ENCODE measurements at regions of chr3 and their contacts with region 1.

Region 1: DNA sequence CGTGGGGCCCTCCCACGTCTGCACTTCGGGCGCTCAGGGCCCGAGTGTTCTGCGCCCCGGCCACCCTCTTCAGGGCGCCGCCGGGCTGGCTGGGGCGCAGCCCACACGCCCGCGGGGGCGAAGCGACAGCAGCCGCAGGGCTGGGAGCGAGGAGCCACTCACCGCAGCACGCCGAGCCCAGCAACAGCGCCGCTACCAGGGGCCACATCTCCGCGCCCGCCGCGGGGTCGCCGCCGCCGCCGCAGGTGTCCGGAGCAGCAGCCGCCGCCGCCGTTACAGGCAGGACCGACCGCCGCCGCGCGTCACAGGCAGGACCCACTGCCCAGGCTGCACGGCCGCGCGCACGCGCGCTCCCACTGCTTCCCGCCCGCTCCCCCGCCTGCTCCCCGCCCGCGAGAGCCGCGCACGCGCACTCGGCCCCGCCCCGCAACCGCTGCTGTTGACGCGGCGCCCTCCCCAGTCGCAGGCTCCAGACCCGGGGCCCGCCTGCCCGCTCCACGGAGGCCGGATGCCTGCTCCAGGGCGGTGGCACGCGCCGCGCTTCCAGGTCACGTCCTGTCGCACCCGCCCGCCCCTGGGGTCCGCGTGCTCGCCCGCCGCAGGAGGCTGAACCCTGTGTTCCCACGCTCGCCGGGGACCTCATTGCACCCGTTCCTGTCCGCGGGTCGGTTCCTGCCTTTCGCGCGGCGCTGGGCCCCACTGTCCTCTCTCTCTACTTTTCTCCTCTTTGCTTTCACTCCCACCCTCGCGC is at the start of gene CD47:
- DNase-seq: peak; percentile 94 to 98 (median 98)
- ATAC-seq: peak; percentile 74
- H3K4me3 ChIP-seq: peak within 1 kb of the TSS; percentile 93
- H3K4me3 Mint-ChIP-seq: peak within 1 kb of the TSS; percentile 100
- H3K27ac ChIP-seq: peak within 1 kb of the TSS; percentile 92 to 98
- H3K27ac Mint-ChIP-seq: no peak within 1 kb of the TSS
- H3K4me1 ChIP-seq: peaks cover 35% of the 10 kb centered on the region
- H3K4me1 Mint-ChIP-seq: peaks cover 38% of the 10 kb centered on the region
- H3K27me3 ChIP-seq: no peaks in the 10 kb centered on the region
- H3K27me3 Mint-ChIP-seq: no peaks in the 10 kb centered on the region
- CTCF ChIP-seq: no peak
- total RNA-seq, gene CD47: 166 to 170 TPM

Region 2: DNA sequence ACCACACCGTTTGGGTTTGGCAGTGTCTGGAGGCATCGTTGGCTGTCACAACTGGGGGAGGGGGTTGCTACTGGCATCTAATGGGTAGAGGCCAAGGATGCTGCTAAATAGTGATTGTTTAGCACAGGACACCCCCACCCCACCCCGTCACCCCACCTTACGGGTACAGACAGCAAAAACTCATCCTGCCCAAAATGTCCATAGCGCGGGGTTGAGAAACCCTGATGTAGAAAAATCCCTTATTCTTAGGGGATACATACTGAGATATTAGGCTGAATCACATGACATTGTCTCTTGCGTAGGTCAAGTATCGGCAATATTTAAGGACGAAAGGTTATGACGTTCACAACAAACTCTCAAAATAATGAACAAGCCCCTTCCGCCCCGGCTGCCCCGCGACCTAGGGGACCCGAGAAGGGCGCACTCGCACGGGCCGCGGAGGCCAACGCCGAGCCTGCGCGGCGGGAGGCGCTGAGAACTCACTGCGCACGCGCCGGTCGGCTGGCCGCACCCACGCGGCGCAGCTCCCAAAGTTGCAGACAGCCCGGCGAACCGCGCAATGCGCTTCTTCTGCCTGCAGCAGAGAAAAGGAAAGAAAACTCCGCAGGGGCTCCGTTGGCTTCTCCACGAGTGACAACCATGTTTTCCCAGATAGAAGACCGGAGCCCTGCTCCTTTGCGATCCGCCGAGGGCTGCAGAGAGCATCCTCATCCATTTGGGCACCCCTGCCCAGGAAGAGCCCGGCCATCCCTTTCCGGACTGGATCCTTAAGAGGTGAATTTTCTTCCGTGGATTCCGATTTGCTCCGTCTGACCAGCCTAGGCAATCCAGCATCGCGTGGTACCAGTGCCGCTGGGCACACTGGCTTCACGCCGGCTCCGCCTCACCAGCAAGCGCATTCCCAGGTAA is 850.4 kb before region 1 on chr3:
- CTCF ChIA-PET with region 1: no interaction called
- POLR2A ChIA-PET with region 1: no interaction called
- intact Hi-C with region 1: no loop called
- DNase-seq: peak; percentile 46 to 89 (median 65)
- ATAC-seq: peak; percentile 90
- H3K4me3 ChIP-seq: peak overlapping the region; percentile 70
- H3K4me3 Mint-ChIP-seq: peak overlapping the region; percentile 92
- H3K27ac ChIP-seq: no peak overlapping the region
- H3K27ac Mint-ChIP-seq: peak overlapping the region; percentile 40
- H3K4me1 ChIP-seq: peaks cover 14% of the 10 kb centered on the region
- H3K4me1 Mint-ChIP-seq: peaks cover 13% of the 10 kb centered on the region
- H3K27me3 ChIP-seq: no peaks in the 10 kb centered on the region
- H3K27me3 Mint-ChIP-seq: peaks cover 7% of the 10 kb centered on the region
- CTCF ChIP-seq: no peak

Region 3: DNA sequence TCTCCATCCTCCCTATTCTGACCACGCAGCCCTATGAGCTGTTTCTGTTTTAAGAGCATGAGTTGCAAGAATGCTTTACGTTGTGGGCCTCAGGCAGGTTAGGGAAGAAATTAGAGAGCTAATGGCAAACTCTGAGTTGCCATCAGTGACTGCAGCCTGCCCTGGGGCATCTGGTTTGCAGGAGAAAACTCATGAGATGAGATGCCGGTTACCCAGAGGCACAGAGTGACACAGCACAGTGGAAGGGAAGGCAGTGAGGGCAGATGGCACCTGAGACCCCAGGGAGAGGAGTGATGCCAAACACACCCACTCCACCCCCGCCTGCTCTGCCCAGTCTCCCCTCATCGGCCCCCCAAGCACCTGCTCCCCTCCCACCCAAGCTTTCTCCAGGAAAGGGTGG is 265.3 kb before region 1 on chr3:
- CTCF ChIA-PET with region 1: no interaction called
- POLR2A ChIA-PET with region 1: no interaction called
- intact Hi-C with region 1: no loop called
- DNase-seq: no peak
- ATAC-seq: no peak
- H3K4me3 ChIP-seq: no peak overlapping the region
- H3K4me3 Mint-ChIP-seq: no peak overlapping the region
- H3K27ac ChIP-seq: no peak overlapping the region
- H3K27ac Mint-ChIP-seq: no peak overlapping the region
- H3K4me1 ChIP-seq: no peaks in the 10 kb centered on the region
- H3K4me1 Mint-ChIP-seq: no peaks in the 10 kb centered on the region
- H3K27me3 ChIP-seq: peaks cover 0 to 2% of the 10 kb centered on the region in 2 experiments
- H3K27me3 Mint-ChIP-seq: peaks cover 11% of the 10 kb centered on the region
- CTCF ChIP-seq: no peak

Region 4: DNA sequence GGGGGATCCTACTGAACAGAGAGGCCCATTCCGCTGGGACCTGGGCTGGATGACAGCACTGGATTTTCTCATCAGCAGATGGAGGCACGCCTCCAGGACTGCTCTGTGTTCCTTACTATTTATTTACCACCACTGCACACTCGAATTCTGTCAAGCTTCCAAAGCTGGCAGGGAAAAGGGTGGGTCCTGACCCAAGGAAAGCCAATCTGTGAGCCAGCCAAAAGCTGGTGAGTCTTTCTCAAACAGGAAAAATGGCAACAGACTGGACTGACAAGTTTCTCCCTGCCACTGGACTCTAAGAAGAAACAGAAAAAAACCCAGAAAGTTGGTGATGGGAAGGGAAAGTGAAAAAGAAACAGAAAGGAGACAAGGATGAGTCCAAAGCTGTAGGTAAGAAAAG is 37.8 kb before region 1 on chr3:
- CTCF ChIA-PET with region 1: no interaction called
- POLR2A ChIA-PET with region 1: no interaction called
- intact Hi-C with region 1: loop called in 1 of 2 experiments (anchors 5 kb)
- DNase-seq: no peak
- ATAC-seq: no peak
- H3K4me3 ChIP-seq: no peak overlapping the region
- H3K4me3 Mint-ChIP-seq: no peak overlapping the region
- H3K27ac ChIP-seq: no peak overlapping the region
- H3K27ac Mint-ChIP-seq: peak overlapping the region; percentile 74
- H3K4me1 ChIP-seq: peaks cover 11% of the 10 kb centered on the region
- H3K4me1 Mint-ChIP-seq: peaks cover 63% of the 10 kb centered on the region
- H3K27me3 ChIP-seq: no peaks in the 10 kb centered on the region
- H3K27me3 Mint-ChIP-seq: no peaks in the 10 kb centered on the region
- CTCF ChIP-seq: no peak

Region 5: DNA sequence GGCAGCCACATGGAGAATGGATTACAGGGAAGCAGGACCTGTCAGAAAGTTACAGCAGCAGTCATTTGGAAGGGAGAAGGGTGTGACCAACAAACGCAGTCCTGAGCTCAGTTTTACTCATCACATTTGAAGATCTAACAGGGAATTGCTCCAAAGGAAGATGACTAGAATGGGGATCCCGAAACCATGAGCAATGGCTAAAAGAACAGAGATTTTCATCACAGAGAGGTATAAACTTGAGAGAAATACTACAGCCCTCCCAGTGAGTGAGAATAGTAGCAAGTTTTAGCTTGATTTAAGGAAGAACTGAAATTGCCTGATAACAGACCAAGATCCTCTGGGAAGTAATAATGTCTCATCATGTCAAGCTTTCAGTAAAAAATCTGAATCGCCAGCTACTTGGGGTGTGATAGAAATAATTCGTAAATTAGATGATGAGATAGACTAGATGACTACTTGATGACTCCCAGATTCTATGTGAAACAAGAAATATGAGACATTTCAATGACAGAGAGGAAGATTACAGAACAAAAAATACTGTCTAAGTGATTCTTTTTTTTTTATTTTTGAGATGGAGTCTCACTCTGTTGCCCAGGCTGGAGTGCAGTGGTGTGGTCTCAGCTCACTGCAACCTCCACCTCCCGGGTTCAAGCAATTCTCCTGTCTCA is 17.0 kb before region 1 on chr3:
- CTCF ChIA-PET with region 1: interaction called, 5 read pairs
- POLR2A ChIA-PET with region 1: interaction called, 6 read pairs
- intact Hi-C with region 1: loop called in 1 of 2 experiments (anchors 2 kb)
- DNase-seq: no peak
- ATAC-seq: no peak
- H3K4me3 ChIP-seq: no peak overlapping the region
- H3K4me3 Mint-ChIP-seq: peak overlapping the region; percentile 39
- H3K27ac ChIP-seq: no peak overlapping the region
- H3K27ac Mint-ChIP-seq: peak overlapping the region; percentile 23
- H3K4me1 ChIP-seq: peaks cover 15% of the 10 kb centered on the region
- H3K4me1 Mint-ChIP-seq: peaks cover 93% of the 10 kb centered on the region
- H3K27me3 ChIP-seq: no peaks in the 10 kb centered on the region
- H3K27me3 Mint-ChIP-seq: no peaks in the 10 kb centered on the region
- CTCF ChIP-seq: no peak

Region 6: GRCh38 chr3:108079877-108080659 is 10.8 kb before region 1 on chr3:
- CTCF ChIA-PET with region 1: interaction called, 4 read pairs
- POLR2A ChIA-PET with region 1: interaction called, 6 read pairs
- intact Hi-C with region 1: loop called in 1 of 2 experiments (anchors 1 kb)
- DNase-seq: peak in 1 of 14 experiments; percentile 22
- ATAC-seq: peak; percentile 61
- H3K4me3 ChIP-seq: no peak overlapping the region
- H3K4me3 Mint-ChIP-seq: peak overlapping the region; percentile 34
- H3K27ac ChIP-seq: no peak overlapping the region
- H3K27ac Mint-ChIP-seq: peak overlapping the region; percentile 69
- H3K4me1 ChIP-seq: peaks cover 18% of the 10 kb centered on the region
- H3K4me1 Mint-ChIP-seq: peaks cover 70% of the 10 kb centered on the region
- H3K27me3 ChIP-seq: no peaks in the 10 kb centered on the region
- H3K27me3 Mint-ChIP-seq: no peaks in the 10 kb centered on the region
- CTCF ChIP-seq: no peak

Region 7: GRCh38 chr3:108100906-108101660 is 10.2 kb after region 1 on chr3:
- CTCF ChIA-PET with region 1: interaction called, 3 read pairs
- POLR2A ChIA-PET with region 1: interaction called, 12 read pairs
- intact Hi-C with region 1: loop called in 1 of 2 experiments (anchors 1 kb)
- DNase-seq: peak in 5 of 14 experiments; percentile 14 to 74 (median 42)
- ATAC-seq: peak; percentile 79
- H3K4me3 ChIP-seq: no peak overlapping the region
- H3K4me3 Mint-ChIP-seq: peak overlapping the region; percentile 2
- H3K27ac ChIP-seq: peak overlapping the region in 1 of 2 donors; percentile 22
- H3K27ac Mint-ChIP-seq: peak overlapping the region; percentile 73
- H3K4me1 ChIP-seq: peaks cover 19% of the 10 kb centered on the region
- H3K4me1 Mint-ChIP-seq: peaks cover 56% of the 10 kb centered on the region
- H3K27me3 ChIP-seq: no peaks in the 10 kb centered on the region
- H3K27me3 Mint-ChIP-seq: no peaks in the 10 kb centered on the region
- CTCF ChIP-seq: no peak

Region 8: GRCh38 chr3:108124337-108125152 is 33.7 kb after region 1 on chr3:
- CTCF ChIA-PET with region 1: interaction called, 6 read pairs
- POLR2A ChIA-PET with region 1: interaction called, 323 read pairs
- intact Hi-C with region 1: loop called (anchors 1 to 2 kb)
- DNase-seq: peak in 13 of 14 experiments; percentile 17 to 92 (median 45)
- ATAC-seq: peak; percentile 56
- H3K4me3 ChIP-seq: peak overlapping the region; percentile 55
- H3K4me3 Mint-ChIP-seq: peak overlapping the region; percentile 87
- H3K27ac ChIP-seq: peak overlapping the region; percentile 93
- H3K27ac Mint-ChIP-seq: peak overlapping the region; percentile 95
- H3K4me1 ChIP-seq: peaks cover 67% of the 10 kb centered on the region
- H3K4me1 Mint-ChIP-seq: peaks cover 73% of the 10 kb centered on the region
- H3K27me3 ChIP-seq: no peaks in the 10 kb centered on the region
- H3K27me3 Mint-ChIP-seq: no peaks in the 10 kb centered on the region
- CTCF ChIP-seq: no peak

Region 9: GRCh38 chr3:108133858-108134554 is 43.1 kb after region 1 on chr3:
- CTCF ChIA-PET with region 1: interaction called, 6 read pairs
- POLR2A ChIA-PET with region 1: interaction called, 323 read pairs
- intact Hi-C with region 1: no loop called
- DNase-seq: peak in 1 of 14 experiments; percentile 46
- ATAC-seq: peak; percentile 17
- H3K4me3 ChIP-seq: peak overlapping the region; percentile 15
- H3K4me3 Mint-ChIP-seq: peak overlapping the region; percentile 75
- H3K27ac ChIP-seq: peak overlapping the region in 1 of 2 donors; percentile 6
- H3K27ac Mint-ChIP-seq: peak overlapping the region; percentile 82
- H3K4me1 ChIP-seq: peaks cover 31% of the 10 kb centered on the region
- H3K4me1 Mint-ChIP-seq: peaks cover 92% of the 10 kb centered on the region
- H3K27me3 ChIP-seq: no peaks in the 10 kb centered on the region
- H3K27me3 Mint-ChIP-seq: no peaks in the 10 kb centered on the region
- CTCF ChIP-seq: no peak

Region 10: GRCh38 chr3:108153451-108153981 is 62.6 kb after region 1 on chr3:
- CTCF ChIA-PET with region 1: no interaction called
- POLR2A ChIA-PET with region 1: no interaction called
- intact Hi-C with region 1: no loop called
- DNase-seq: peak; percentile 5 to 73 (median 28)
- ATAC-seq: peak; percentile 57
- H3K4me3 ChIP-seq: no peak overlapping the region
- H3K4me3 Mint-ChIP-seq: no peak overlapping the region
- H3K27ac ChIP-seq: no peak overlapping the region
- H3K27ac Mint-ChIP-seq: no peak overlapping the region
- H3K4me1 ChIP-seq: peaks cover 4% of the 10 kb centered on the region
- H3K4me1 Mint-ChIP-seq: peaks cover 12% of the 10 kb centered on the region
- H3K27me3 ChIP-seq: no peaks in the 10 kb centered on the region
- H3K27me3 Mint-ChIP-seq: no peaks in the 10 kb centered on the region
- CTCF ChIP-seq: peak; percentile 50